ENCODE measurements at regions of chr1 and their contacts with region 1.

Region 1: GRCh38 chr1:228471762-228472398 is 15.3 kb upstream of the RNF187 start:
- DNase-seq: no peak
- ATAC-seq: peak; percentile 61
- H3K4me3 Mint-ChIP-seq: no peak overlapping the region
- H3K27ac Mint-ChIP-seq: no peak overlapping the region
- H3K4me1 Mint-ChIP-seq: peaks cover 45% of the 10 kb centered on the region
- H3K27me3 Mint-ChIP-seq: peaks cover 42% of the 10 kb centered on the region
- CTCF ChIP-seq: peak; percentile 34; the same call in 1 of the 2 replicates

Region 2: DNA sequence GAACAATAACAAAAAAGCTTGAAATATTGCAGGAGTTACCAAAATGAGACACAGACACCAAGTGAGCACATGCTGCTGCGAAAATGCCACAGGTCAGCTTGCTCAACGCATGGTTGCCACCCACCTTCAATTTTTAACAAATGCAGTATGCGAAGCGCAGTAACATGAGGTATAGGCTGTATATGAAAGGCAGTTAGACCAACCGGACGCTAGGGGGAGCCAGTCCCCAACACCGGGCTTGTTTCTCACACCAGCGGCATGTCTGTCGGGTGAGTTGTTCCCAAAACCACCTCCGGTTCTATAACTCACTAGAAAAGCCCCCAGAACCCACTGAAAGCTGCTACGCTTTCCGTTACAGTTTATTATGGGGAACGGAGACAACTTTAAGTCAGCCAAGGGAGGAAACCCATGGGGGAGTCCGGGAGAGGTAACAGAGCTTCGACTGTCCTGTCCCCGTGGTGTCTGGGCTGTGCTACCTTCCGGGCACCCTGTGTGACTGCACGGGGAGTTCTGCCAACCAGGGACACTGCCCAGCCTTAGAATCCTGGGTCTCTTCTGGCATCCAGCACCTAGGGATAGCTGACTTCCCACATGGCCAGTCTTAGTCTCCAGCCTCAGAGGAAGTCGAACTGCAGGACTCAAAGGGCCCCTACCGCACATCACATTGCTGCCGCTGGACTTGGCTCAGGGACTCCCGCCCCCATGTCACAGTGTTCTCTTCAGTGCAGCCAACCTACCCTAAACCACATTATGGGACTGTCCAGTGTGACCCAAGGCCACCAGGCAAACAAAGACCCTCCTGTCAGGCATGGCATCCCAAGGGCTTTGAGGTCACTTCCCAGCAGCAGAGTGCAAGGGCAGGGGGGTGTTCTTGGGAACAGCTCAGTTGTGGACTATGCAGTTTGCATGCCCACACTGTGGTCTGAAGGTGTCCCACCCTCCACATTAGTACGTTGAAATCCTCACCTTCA is 29.3 kb after region 1 on chr1:
- CTCF ChIA-PET with region 1: interaction called, 12 read pairs
- POLR2A ChIA-PET with region 1: no interaction called
- DNase-seq: peak; percentile 86
- ATAC-seq: peak; percentile 90
- H3K4me3 Mint-ChIP-seq: no peak overlapping the region
- H3K27ac Mint-ChIP-seq: no peak overlapping the region
- H3K4me1 Mint-ChIP-seq: peaks cover 14% of the 10 kb centered on the region
- H3K27me3 Mint-ChIP-seq: peaks cover 78% of the 10 kb centered on the region
- CTCF ChIP-seq: peak; percentile 91